ENCODE measurements at regions of chr20 and their contacts with region 1.

Region 1: GRCh38 chr20:1577906-1578305 is 20.4 kb upstream of the SIRPD start:
- DNase-seq: no peak
- ATAC-seq: no peak
- H3K4me3 ChIP-seq: no peak overlapping the region
- H3K27ac ChIP-seq: no peak overlapping the region
- H3K4me1 ChIP-seq: no peaks in the 10 kb centered on the region
- H3K27me3 ChIP-seq: no peaks in the 10 kb centered on the region

Region 2: DNA sequence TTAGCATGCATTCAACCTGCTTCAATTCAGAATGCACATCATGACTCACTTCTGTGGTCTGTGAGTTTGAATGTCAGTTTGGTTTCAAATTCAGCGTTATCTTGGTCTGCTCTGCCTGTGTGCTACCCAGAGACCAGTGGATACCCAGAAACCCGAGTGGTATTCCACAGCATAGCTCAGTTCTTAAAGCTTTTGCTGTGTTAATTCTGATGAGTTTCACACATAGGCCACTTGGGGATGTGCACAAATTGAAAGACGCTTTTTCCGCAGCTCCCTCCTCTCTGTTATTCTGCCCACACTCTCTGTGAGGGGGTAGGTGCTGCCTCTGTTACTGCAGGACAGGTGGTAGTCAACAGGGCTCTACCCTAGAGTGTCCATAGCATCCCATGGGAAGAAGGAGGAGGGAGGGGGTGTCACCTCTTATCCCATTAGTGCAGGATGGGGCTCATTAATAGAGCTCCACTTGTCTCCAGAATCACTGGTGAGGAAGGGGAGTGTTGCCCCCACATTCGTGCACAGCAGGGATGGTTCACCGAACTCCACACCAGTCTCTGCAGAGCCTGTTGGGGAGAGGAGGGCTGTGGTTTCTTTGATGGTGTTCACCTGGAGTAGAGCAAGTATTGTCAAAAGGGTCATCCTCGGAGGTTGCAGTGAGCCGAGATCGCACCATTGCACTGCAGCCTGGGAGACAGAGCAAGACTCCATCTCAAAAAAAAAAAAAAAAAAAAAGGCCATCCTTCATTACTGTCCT is 219.8 kb before region 1 on chr20:
- intact Hi-C with region 1: no loop called
- DNase-seq: no peak
- ATAC-seq: no peak
- H3K4me3 ChIP-seq: no peak overlapping the region
- H3K27ac ChIP-seq: no peak overlapping the region
- H3K4me1 ChIP-seq: no peaks in the 10 kb centered on the region
- H3K27me3 ChIP-seq: no peaks in the 10 kb centered on the region

Region 3: DNA sequence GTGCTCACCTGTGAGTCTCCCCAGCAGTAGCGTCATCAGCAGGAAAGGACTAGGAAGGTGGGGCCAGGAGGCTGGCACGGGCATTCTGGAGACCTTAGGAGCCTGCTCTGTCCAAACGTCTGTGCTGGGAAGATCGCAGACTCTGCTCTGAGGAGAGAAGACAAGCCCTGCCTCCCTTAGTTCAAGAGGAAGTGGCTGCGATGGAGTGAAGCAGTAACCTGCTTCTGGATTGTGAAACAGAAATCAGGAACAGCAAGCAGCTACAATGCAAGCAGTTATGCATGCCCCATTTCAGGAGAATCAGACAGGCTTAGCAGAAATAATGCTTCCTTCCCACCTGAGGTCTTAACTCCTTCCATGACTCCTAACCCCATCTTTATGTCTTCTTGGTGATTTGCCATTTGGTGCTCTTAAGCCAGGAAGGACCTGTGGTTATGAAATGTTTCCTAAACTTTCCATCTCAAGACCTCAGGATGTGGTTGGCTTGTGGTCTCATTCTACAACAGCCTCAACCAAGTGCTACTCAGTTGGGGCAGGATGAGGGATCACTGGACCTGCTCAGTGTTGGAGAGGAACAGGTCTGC is 42.0 kb after region 1 on chr20 and contains the start of gene SIRPB1:
- intact Hi-C with region 1: loop called in 1 of 4 experiments (anchors 2 kb)
- DNase-seq: peak in 1 of 3 donors; percentile 53
- ATAC-seq: peak in 1 of 2 donors; percentile 40
- H3K4me3 ChIP-seq: no peak within 1 kb of the TSS
- H3K27ac ChIP-seq: no peak within 1 kb of the TSS
- H3K4me1 ChIP-seq: no peaks in the 10 kb centered on the region
- H3K27me3 ChIP-seq: no peaks in the 10 kb centered on the region
- total RNA-seq, gene SIRPB1: 0.35 to 7.2 (median 1.3) TPM